Activated naive CD4-positive, alpha-beta T cell treated with anti-CD3 and anti-CD28 coated beads, Interleukin-2, amount 10 ng/mL, durations not matched to agents 7 days and 5 days (primary cell): ENCODE measurements at regions of chr5 and their contacts with region 1.

Region 1: DNA sequence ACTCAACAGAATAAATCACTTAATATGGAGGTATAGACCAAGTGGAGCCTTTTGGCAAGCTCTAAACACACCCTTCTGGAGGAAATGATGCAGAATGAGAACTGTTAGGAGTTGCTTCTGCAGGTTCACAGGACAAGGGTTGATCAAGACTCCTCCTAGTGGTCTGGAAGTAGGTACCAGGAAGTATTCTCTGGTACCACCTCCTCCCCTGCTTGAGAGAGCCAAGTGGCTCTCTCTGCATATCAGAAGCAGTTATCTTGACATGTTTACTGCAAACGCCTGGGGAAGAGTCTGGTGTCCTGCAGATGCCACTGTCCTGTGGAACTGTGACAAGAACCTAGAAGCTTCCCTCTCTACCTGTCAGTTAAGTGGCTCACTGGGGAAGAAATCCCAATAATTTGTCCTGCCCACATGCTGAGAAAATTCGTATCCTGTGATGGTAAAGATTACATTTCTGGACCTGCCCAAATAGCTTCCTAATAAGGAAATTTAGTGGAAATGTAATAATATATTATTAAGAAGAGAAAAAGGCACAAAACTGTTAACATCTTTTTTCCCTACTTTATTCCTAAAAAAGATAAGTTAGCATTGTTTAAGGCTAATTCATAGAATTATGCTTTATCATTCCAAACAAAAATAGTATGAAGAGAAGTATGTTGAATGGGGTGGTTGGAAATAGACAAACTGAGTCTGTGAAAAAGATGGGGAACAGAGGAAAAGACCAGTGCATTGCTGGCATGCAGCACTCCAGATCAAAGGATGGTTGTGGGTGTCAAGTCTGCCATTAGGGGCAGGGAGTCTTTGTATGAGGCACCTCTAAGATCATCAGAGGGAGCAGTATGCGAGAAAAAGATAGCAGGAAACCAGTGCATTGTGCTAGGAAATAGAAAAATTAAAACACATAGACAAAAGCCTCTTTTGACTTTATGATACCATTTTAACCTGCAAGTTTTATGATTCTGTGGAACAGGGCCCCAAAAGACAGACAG is 118.8 kb downstream of the CDC42SE2 start:
- DNase-seq: peak; percentile 61
- H3K4me3 Mint-ChIP-seq: peak overlapping the region; percentile 19
- H3K27ac Mint-ChIP-seq: peak overlapping the region; percentile 93
- H3K4me1 Mint-ChIP-seq: peaks cover 84% of the 10 kb centered on the region
- H3K27me3 Mint-ChIP-seq: no peaks in the 10 kb centered on the region

Region 2: DNA sequence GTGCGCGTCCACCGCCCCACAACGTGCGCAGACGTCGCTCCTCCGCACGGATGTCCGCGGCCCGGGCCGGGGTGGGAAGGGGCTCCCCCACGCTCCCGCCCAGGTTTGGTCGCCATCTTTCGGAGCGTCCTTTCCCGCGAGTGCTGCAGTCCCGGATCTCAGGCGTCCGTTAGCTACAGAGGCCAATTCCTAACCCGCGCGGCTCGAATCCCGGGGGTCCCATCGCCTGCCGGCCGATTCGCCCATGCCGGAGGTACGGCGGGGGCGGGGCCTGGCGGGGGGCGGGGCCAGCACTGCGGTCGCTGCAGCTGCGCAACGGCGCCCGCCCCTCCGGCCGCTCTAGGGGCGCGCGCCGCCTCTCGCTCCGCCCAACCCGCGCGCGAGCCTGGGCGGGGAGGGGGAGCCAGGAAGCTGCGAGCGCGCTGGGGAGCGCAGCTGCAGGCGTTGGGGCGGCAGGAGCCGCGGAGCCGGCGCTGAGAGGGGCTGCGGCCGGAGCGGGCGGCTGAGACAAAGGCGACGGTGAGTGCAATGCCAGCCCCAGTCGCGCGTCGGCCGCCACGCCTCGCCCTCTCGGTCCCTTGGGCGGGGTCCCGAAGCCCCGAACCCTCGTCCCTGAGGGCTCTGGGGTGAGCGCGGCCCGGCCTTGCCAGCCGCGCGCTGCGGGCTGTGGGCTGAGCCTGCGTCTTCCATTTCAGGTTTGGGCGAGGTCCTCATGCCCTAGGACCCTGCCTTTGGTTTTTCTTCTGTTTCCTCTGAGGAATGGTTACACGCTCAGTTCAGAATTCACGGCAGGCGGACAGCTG is 118.9 kb before region 1 on chr5 and contains the start of gene CDC42SE2:
- CTCF ChIA-PET with region 1: interaction called, 32 read pairs
- DNase-seq: peak; percentile 88
- H3K4me3 Mint-ChIP-seq: peak within 1 kb of the TSS; percentile 82
- H3K27ac Mint-ChIP-seq: peak within 1 kb of the TSS; percentile 95
- H3K4me1 Mint-ChIP-seq: peaks cover 54% of the 10 kb centered on the region
- H3K27me3 Mint-ChIP-seq: no peaks in the 10 kb centered on the region

Region 3: DNA sequence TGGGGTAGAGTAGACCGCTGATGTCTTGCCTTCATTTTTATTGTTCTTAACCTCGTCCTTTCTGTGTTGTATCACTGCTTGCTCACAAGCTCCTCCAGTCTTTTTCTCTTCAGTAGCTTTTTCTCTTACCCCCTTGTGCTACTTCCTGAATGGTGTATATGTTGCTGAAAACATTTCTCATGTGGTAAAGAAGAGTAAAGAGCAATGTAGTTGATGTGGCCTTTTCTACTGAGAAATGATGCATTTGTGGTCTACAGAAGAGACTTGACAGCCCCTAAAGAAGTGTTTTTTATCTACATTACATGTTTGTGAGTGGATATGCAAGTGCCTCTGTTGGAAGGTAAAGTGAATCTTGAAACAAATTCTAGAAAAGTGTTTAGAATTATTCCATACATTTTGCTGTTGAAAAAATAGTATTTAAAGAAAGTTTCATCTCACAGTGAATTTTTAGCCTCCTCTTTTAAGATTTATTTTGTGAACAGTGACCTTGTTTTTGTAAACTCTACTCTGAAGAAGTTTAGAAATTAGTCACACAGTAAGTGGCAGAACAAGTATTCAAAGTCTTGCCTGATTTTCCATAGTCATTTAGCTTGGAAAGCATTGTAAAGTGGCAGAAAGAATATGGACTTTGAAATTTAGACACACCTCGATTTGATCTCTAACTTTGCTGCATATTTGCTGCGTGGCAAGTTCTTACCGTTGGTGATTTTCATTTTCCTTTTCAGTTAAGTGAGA is 101.4 kb before region 1 on chr5:
- CTCF ChIA-PET with region 1: interaction called, 18 read pairs
- DNase-seq: no peak
- H3K4me3 Mint-ChIP-seq: peak overlapping the region; percentile 75
- H3K27ac Mint-ChIP-seq: peak overlapping the region; percentile 98
- H3K4me1 Mint-ChIP-seq: peaks cover 93% of the 10 kb centered on the region
- H3K27me3 Mint-ChIP-seq: no peaks in the 10 kb centered on the region

Region 4: GRCh38 chr5:131296213-131296672 is 86.5 kb before region 1 on chr5:
- CTCF ChIA-PET with region 1: no interaction called
- DNase-seq: peak; percentile 45
- H3K4me3 Mint-ChIP-seq: no peak overlapping the region
- H3K27ac Mint-ChIP-seq: peak overlapping the region; percentile 77
- H3K4me1 Mint-ChIP-seq: peaks cover 78% of the 10 kb centered on the region
- H3K27me3 Mint-ChIP-seq: no peaks in the 10 kb centered on the region

Region 5: DNA sequence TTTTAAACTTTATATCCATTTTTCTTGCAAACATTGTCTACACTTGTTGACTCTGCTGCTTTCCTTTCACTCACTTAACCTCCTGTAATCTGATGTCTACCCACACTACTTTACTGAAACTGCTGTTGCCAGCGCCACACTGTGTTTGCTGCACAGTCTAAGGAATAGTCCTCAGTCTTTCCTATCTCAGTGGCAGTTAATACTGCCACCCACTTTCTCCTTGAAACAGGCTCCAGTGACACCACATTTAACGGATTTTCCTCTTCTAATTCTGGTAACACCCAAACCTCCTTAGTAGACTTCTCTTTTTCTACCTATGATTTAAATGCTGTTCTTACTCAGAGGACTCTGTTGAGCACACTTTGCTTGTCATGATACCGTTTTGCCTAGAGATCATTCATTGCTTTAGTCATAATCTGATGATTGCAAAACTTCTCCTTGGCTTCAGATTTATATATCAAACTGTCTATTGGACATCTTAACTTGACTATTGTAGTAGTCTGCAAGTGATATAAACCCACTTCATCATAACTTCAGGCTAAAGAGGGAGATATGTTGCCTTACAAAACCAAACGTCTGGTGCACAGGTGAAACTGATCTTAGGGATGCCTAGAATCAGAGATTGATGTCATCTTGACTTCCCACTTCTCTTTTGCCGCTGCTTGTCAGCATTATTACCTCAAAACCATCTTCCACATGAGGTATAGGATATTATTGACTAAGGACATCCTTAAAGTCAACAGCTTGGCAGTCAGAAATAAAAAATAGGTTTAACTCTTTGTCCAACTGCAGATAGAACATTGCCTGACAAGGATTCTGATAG is 24.8 kb before region 1 on chr5:
- CTCF ChIA-PET with region 1: interaction called, 26 read pairs
- DNase-seq: peak; percentile 59
- H3K4me3 Mint-ChIP-seq: peak overlapping the region; percentile 14
- H3K27ac Mint-ChIP-seq: peak overlapping the region; percentile 80
- H3K4me1 Mint-ChIP-seq: peaks cover 55% of the 10 kb centered on the region
- H3K27me3 Mint-ChIP-seq: no peaks in the 10 kb centered on the region

Region 6: GRCh38 chr5:131364507-131365050 is 18.1 kb before region 1 on chr5:
- CTCF ChIA-PET with region 1: interaction called, 15 read pairs
- DNase-seq: peak; percentile 49
- H3K4me3 Mint-ChIP-seq: no peak overlapping the region
- H3K27ac Mint-ChIP-seq: peak overlapping the region; percentile 79
- H3K4me1 Mint-ChIP-seq: peaks cover 69% of the 10 kb centered on the region
- H3K27me3 Mint-ChIP-seq: no peaks in the 10 kb centered on the region

Region 7: DNA sequence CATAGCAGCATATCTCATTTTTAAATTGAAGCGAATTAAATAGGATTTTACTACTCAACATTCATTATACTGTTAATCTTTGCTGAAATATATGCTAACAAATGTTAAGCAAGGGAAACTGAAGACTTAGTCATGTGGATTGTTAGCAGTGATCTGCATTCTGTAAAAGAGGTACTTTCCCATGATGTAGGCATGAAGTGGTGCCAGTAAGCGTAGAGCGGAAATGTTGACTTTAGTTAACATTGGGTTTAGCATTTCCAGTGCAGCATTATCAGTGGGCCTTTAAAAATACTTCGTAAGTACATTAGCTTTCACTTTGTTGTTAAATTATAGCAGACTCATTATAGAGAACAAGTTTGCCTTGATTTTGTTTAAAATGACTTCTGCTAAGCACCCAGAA is 11.4 kb after region 1 on chr5:
- CTCF ChIA-PET with region 1: interaction called, 12 read pairs
- DNase-seq: peak; percentile 57
- H3K4me3 Mint-ChIP-seq: peak overlapping the region; percentile 55
- H3K27ac Mint-ChIP-seq: peak overlapping the region; percentile 89
- H3K4me1 Mint-ChIP-seq: peaks cover 79% of the 10 kb centered on the region
- H3K27me3 Mint-ChIP-seq: no peaks in the 10 kb centered on the region

Region 8: GRCh38 chr5:131413605-131414559 is 31.2 kb after region 1 on chr5:
- CTCF ChIA-PET with region 1: interaction called, 16 read pairs
- DNase-seq: peak; percentile 55
- H3K4me3 Mint-ChIP-seq: no peak overlapping the region
- H3K27ac Mint-ChIP-seq: peak overlapping the region; percentile 82
- H3K4me1 Mint-ChIP-seq: peaks cover 31% of the 10 kb centered on the region
- H3K27me3 Mint-ChIP-seq: no peaks in the 10 kb centered on the region

Region 9: GRCh38 chr5:131475541-131475941 is 92.8 kb after region 1 on chr5:
- CTCF ChIA-PET with region 1: no interaction called
- DNase-seq: no peak
- H3K4me3 Mint-ChIP-seq: no peak overlapping the region
- H3K27ac Mint-ChIP-seq: no peak overlapping the region
- H3K4me1 Mint-ChIP-seq: peaks cover 17% of the 10 kb centered on the region
- H3K27me3 Mint-ChIP-seq: no peaks in the 10 kb centered on the region

Region 10: DNA sequence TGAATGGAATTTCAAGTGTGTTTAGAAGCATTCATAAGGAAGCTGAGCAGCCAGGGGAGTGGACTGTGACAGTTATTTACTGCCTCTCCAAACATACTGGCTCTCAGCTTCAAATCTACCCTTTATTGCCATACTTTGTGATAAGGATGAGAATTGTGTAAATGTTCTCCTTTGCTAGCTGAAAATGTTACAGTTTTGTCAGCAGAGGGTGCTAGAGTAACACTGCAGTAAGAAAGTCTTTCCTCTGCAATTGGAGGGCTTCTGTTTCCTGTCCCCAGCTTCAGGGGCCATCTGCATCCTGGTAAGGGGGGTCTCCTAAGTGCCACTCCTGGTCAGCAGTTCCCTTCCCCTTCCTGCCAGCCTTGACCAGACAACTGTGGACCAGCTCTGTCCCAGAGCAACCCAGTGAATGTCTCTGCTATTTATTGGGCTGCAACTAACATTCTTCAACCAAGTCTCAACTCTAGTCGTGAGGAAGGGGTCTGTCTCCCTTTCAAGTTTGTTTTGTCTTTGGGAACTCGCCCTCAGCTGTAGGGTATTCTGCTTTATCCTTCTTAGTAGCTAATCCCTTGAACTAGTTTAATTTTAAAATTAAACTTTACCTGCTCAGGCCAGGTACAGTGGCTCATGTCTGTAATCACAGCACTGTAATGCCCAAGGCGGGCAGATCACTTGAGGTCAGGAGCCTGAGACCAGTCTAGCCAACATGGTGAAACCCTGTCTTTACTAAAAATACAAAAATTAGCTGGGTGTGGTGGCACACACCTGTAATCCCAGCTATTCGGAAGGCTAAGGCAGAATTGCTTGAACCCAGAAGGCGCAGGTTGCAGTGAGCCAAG is 207.0 kb after region 1 on chr5:
- CTCF ChIA-PET with region 1: no interaction called
- DNase-seq: peak; percentile 33
- H3K4me3 Mint-ChIP-seq: no peak overlapping the region
- H3K27ac Mint-ChIP-seq: no peak overlapping the region
- H3K4me1 Mint-ChIP-seq: peaks cover 35% of the 10 kb centered on the region
- H3K27me3 Mint-ChIP-seq: no peaks in the 10 kb centered on the region